A549 (cell line): ENCODE measurements at regions of chr12 and their contacts with region 1.

Region 1: GRCh38 chr12:52879394-52880351 is 25.2 kb downstream of the KRT8 start:
- DNase-seq: peak; percentile 82 to 98
- ATAC-seq: peak; percentile 88 to 90
- H3K4me3 ChIP-seq: 0 out of 3 replicates have a peak overlapping the region, but pooled peaks have one; percentile 14
- H3K27ac ChIP-seq: peak overlapping the region; percentile 94 to 97
- H3K4me1 ChIP-seq: peaks cover 61% of the 10 kb centered on the region
- CTCF ChIP-seq: peak; percentile 97
- EP300 ChIP-seq: no peak
- POLR2A ChIP-seq: 0 out of 2 replicates have a peak, but pooled peaks have one; percentile 23
- RAD21 ChIP-seq: peak; percentile 90 to 99

Region 2: GRCh38 chr12:52139552-52140062 is 740.1 kb before region 1 on chr12:
- CTCF ChIA-PET with region 1: interaction called, 833 read pairs
- POLR2A ChIA-PET with region 1: interaction called, 5 read pairs
- DNase-seq: peak; percentile 68 to 90
- ATAC-seq: peak; percentile 64 to 66; a peak in 5 of 6 replicates
- H3K4me3 ChIP-seq: no peak overlapping the region
- H3K27ac ChIP-seq: peak overlapping the region; percentile 100; a peak in 5 of 6 replicates
- H3K4me1 ChIP-seq: peaks cover 26% of the 10 kb centered on the region
- CTCF ChIP-seq: peak; percentile 97
- EP300 ChIP-seq: no peak
- POLR2A ChIP-seq: no peak
- RAD21 ChIP-seq: peak; percentile 92 to 97

Region 3: DNA sequence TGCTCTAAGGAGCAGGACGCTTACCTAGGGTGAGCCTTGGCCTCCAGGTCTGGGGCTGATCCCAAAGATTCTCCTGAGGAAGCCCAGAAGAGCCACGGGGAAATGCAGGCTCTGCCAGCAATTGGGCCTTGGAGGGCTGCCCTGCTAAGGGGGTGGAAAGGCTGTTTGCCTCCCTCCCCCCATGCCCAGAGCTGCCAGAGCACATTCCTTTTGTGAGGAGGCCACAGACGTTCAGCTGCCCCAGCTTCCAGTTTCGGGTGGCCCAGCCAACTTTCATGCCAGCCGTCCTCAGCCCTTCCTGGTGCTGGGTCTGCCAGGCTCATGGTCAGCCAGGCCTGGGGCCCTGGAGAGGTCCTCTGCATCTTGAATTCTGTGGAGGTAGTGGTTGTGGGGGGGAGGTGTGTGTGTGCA is 630.6 kb before region 1 on chr12:
- CTCF ChIA-PET with region 1: interaction called, 24 read pairs
- POLR2A ChIA-PET with region 1: interaction called, 21 read pairs
- DNase-seq: peak in 1 of 2 experiments; percentile 71
- ATAC-seq: peak; percentile 0; a peak in 2 of 6 replicates
- H3K4me3 ChIP-seq: no peak overlapping the region
- H3K27ac ChIP-seq: peak overlapping the region; percentile 92 to 97
- H3K4me1 ChIP-seq: peaks cover 96% of the 10 kb centered on the region
- CTCF ChIP-seq: no peak
- EP300 ChIP-seq: no peak
- POLR2A ChIP-seq: no peak; the same call in 1 of the 2 replicates
- RAD21 ChIP-seq: 0 out of 5 replicates have a peak, but pooled peaks of 1 of the 2 experiments have one; percentile 2

Region 4: GRCh38 chr12:52307836-52308805 is 571.6 kb before region 1 on chr12:
- CTCF ChIA-PET with region 1: interaction called, 28 read pairs
- POLR2A ChIA-PET with region 1: no interaction called
- DNase-seq: peak in 1 of 2 experiments; percentile 49
- ATAC-seq: peak; percentile 55 to 77
- H3K4me3 ChIP-seq: no peak overlapping the region
- H3K27ac ChIP-seq: peak overlapping the region; percentile 60 to 87
- H3K4me1 ChIP-seq: peaks cover 6% of the 10 kb centered on the region; the same call in 1 of the 3 replicates
- CTCF ChIP-seq: no peak
- EP300 ChIP-seq: no peak
- POLR2A ChIP-seq: no peak
- RAD21 ChIP-seq: no peak

Region 5: DNA sequence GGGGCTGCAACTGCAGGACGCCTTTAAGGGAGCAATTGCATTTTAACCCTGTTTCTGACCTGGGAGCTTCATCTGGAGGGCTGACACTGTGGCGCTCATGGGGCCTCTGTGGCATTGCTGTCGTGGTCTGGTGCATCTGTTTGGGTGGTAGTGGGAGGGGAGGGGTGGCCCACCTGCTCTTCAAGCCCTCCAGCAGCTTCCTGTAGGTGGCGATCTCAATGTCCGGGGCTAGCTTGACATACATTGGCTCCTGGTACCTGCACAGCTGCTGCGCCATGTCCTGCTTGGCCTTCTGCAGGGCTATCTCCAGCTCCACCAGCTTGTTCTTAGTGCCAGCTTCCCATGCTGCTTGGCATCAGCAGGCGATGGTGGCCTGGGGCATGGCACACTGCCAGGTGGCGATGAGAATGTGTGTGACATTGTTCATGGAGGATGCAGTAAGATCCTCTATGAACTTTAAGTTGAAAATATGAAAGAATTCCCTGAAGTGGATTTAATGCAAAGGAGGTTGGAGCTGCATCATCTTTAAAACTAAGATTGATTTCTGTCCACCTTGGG is 465.8 kb before region 1 on chr12:
- CTCF ChIA-PET with region 1: interaction called, 11 read pairs
- POLR2A ChIA-PET with region 1: no interaction called
- DNase-seq: no peak
- ATAC-seq: peak in 1 of 2 experiments; percentile 40; a peak in 2 of 6 replicates
- H3K4me3 ChIP-seq: no peak overlapping the region
- H3K27ac ChIP-seq: peak overlapping the region in 1 of 2 experiments; percentile 37; a peak in 1 of 6 replicates
- H3K4me1 ChIP-seq: peaks cover 29% of the 10 kb centered on the region
- CTCF ChIP-seq: no peak
- EP300 ChIP-seq: no peak
- POLR2A ChIP-seq: no peak
- RAD21 ChIP-seq: no peak

Region 6: GRCh38 chr12:52769354-52769753 is 110.3 kb before region 1 on chr12:
- CTCF ChIA-PET with region 1: no interaction called
- POLR2A ChIA-PET with region 1: no interaction called
- DNase-seq: no peak
- ATAC-seq: no peak
- H3K4me3 ChIP-seq: no peak overlapping the region
- H3K27ac ChIP-seq: no peak overlapping the region
- H3K4me1 ChIP-seq: no peaks in the 10 kb centered on the region
- CTCF ChIP-seq: no peak
- EP300 ChIP-seq: no peak
- POLR2A ChIP-seq: no peak
- RAD21 ChIP-seq: no peak

Region 7: GRCh38 chr12:52895061-52895887 is 15.6 kb after region 1 on chr12:
- CTCF ChIA-PET with region 1: interaction called, 440 read pairs
- POLR2A ChIA-PET with region 1: interaction called, 3 read pairs
- DNase-seq: peak; percentile 85 to 98
- ATAC-seq: peak; percentile 66 to 71
- H3K4me3 ChIP-seq: 0 out of 3 replicates have a peak overlapping the region, but pooled peaks have one; percentile 7
- H3K27ac ChIP-seq: peak overlapping the region; percentile 78 to 91
- H3K4me1 ChIP-seq: peaks cover 59% of the 10 kb centered on the region
- CTCF ChIP-seq: no peak
- EP300 ChIP-seq: peak; percentile 76 to 84; a peak in 2 of 5 replicates
- POLR2A ChIP-seq: no peak
- RAD21 ChIP-seq: 0 out of 5 replicates have a peak, but pooled peaks of 1 of the 2 experiments have one; percentile 27

Region 8: DNA sequence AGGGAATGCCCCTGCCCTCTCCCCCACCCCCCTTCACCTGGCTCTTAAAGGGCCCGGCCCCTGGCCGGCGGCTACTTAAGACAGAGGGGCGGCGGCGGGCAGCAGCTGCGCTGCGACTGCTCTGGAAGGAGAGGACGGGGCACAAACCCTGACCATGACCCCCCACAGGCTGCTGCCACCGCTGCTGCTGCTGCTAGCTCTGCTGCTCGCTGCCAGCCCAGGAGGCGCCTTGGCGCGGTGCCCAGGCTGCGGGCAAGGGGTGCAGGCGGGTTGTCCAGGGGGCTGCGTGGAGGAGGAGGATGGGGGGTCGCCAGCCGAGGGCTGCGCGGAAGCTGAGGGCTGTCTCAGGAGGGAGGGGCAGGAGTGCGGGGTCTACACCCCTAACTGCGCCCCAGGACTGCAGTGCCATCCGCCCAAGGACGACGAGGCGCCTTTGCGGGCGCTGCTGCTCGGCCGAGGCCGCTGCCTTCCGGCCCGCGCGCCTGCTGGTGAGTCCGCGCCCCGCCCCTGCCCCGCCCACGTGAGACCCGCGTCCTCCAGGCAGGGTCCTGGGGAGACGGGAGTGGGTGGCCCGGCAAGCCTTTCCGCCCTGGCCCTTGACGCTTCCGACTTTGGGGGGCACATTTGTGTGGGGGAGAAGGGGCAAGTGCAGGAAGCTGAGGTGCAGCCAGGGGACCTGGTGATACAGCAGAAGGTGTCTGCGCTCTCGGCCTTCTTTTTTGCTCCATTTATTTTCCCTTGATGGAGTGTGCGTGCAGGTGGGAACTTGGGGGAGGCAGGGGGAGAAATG is 218.1 kb after region 1 on chr12 and contains the start of gene IGFBP6:
- CTCF ChIA-PET with region 1: no interaction called
- POLR2A ChIA-PET with region 1: no interaction called
- DNase-seq: peak; percentile 65
- ATAC-seq: peak; percentile 72 to 85
- H3K4me3 ChIP-seq: peak within 1 kb of the TSS; percentile 54
- H3K27ac ChIP-seq: peak within 1 kb of the TSS; percentile 92 to 95
- H3K4me1 ChIP-seq: peaks cover 49% of the 10 kb centered on the region
- CTCF ChIP-seq: no peak
- EP300 ChIP-seq: no peak
- POLR2A ChIP-seq: peak; percentile 81
- RAD21 ChIP-seq: no peak
- polyA plus RNA-seq, gene IGFBP6: 49.1 and 64.5 TPM in 2 replicates

Region 9: DNA sequence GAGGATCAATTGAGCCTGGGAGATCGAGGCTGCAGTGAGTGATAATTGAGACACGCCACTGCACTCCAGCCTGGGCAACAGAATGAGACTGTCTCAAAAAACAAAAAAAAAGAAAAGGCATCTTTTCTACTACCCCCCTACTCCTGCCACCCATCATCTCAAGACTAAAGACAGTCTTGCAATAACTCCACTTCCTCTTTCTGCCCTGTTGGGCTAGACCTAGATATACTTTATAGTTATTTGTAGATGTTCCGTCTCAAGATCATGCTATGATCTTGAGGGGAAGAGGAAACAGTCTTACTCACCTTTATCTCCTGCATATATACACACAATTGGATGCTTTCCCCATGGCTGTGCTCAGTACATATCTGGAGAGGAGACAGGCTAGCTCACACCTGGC is 376.3 kb after region 1 on chr12:
- CTCF ChIA-PET with region 1: no interaction called
- POLR2A ChIA-PET with region 1: no interaction called
- DNase-seq: no peak
- ATAC-seq: no peak
- H3K4me3 ChIP-seq: no peak overlapping the region
- H3K27ac ChIP-seq: no peak overlapping the region
- H3K4me1 ChIP-seq: peaks cover 11% of the 10 kb centered on the region
- CTCF ChIP-seq: no peak
- EP300 ChIP-seq: no peak
- POLR2A ChIP-seq: no peak
- RAD21 ChIP-seq: no peak